Posterior vena cava (tissue), 2 donors: ENCODE measurements at regions of chr2 and their contacts with region 1.

Region 1: DNA sequence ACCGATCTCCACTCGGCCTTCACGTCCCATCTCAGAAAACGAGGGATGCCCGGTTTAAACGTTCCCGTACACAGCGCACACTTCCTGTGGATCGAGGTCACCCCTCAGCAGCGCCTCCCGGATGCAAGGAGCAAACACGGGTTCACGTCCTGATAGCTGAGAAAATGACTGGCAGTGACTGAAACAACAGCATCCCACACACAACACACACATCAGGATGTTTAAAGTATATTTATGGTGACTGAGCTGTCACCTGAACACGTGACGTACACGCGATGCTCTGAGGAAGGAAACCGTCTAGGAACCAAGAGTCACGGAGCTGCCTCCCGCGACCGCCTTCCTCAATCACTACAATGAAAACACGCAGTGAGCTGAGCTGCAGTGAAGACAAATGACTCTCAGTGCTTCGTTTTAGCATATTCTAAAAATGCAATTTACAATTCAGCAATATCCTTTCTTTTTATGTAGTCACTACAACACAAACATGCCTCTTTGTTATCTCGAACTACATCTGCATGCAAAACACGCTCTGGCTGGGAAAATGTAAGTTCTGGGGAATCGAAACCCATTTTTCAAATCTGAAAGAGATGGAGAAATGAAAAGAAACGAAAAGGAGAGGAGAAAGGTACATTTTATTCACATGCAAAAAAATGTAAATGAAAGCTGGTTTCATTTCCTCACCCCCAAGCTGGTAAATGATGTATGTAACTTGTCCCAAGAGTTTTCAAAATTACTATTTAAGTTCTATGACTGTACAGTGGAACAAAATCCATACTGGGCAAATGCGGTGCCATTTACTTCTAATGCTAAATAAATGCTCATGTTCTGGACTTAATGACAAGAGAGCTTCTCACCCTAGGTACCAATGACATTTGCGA is 19.8 kb downstream of the HDAC4 start:
- DNase-seq: peak; percentile 81

Region 2: DNA sequence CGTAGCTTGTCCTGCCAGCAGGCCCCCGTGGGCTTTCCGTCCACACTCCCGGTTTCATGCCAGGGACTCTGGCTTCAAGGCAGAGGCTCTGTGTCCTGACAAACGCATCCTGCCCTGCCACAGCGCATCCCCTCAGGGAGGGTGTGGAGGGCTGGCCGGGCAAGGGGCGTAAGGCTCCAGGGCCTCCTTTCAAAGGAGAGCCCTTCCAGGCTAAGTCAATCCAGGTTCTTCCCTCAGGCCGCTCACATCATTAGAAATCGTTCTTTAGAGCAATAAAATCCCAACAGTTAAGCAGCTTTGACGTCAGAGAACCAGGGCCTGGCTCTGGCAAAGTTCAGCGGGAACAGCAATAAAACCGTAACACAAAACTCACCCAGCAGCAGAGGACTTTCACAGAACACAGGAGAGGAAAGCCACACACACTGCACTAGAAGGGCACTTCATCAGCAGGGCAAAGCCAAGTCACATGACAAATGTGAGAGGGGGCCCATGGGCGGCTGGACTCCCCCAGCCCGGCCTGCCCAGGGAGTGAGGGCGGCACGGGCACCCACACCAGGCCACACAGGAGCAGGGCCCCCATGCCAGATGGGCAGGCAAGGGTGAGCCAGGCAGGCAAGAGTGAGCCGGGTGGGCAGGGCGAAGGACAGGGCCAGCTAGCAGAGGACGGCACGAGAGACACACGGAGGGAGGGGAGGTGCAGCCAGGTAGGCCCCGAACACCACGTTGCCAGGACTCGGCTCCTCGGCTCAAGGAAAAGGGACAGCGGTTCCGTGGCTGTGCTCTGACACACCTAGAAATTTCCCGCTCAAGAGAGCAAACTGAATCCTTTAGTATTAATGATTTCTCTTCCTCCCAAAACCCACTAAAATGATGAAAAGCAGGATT is 32.3 kb before region 1 on chr2:
- intact Hi-C with region 1: loop called in 1 of 2 experiments (anchors 1 kb)
- DNase-seq: no peak